Cardiac septum (tissue), 1 donor: ENCODE measurements at regions of chr15 and their contacts with region 1.

Region 1: GRCh38 chr15:101294731-101295606 is at the start of gene SNRPA1:
- DNase-seq: peak; percentile 98
- total RNA-seq, gene SNRPA1: 26.0 TPM

Region 2: GRCh38 chr15:101579631-101580141 is 284.7 kb after region 1 on chr15:
- intact Hi-C with region 1: loop called (anchors 5 kb)
- DNase-seq: no peak

Region 3: DNA sequence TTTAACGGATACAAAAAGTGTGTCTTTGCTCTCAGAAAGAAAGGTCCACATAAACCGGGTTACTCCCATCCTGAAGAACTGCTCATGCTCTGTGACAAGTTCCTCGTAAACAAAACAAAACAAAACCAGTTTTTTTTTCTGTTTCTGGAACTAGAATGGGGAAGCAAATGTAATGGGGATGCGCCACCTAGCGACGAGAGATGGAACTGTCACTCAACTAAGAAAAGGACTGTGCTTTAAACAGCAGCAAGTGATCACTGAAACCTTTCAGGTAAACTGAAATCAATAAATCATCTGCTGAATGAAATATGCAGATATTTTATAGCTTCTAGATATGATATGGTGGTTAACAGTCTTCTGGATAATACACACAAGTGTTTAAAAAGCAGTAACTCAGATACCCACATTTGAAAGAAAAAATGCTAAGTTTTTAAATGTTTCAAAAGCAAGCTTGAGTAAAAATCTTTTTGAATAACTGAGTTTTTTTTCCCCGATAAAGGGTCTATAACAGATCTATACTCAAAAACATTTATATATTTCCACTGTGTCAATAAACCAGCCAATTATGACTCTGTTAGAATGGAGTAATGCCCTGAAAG is 346.3 kb after region 1 on chr15:
- intact Hi-C with region 1: loop called (anchors 2 kb)
- DNase-seq: peak; percentile 84

Region 4: DNA sequence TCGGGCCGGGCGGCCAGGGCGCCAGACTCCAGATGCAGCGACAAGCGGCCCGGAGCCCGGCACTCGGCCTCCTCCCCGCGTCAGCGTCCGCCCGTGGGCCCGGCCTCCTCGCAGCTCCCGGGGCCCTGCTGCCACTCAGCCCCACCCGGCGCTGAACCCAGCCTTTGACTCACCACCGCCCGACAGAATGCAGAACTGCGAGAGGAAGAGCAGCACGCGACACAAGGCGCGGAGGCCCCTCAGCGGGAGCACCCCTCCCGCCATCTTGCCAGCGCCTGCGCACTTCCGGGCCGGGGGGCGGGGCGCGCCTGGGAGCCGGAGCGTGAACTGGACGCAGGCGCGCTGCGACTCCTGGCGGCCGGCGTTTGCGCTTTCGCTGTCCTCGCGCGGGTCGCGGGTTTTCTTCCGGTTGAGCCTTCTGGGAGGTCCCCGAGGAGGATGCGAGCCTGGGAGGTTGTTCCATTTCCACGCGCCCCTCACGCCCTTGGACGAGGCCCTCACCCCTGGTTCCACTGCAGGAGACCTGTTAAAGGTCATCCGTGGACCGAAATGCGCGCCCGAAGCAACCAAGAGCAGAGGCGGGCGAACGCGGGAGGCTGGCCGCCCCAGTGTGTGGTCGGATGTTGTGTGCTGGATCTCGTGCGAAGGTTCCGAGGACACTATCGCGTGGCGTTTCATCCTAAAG is 357.3 kb after region 1 on chr15 and contains the start of gene TM2D3:
- intact Hi-C with region 1: loop called (anchors 5 kb)
- DNase-seq: peak; percentile 97
- total RNA-seq, gene TM2D3: 45.0 TPM